PC-9 (cell line): ENCODE measurements at regions of chr17 and their contacts with region 1.

Region 1: DNA sequence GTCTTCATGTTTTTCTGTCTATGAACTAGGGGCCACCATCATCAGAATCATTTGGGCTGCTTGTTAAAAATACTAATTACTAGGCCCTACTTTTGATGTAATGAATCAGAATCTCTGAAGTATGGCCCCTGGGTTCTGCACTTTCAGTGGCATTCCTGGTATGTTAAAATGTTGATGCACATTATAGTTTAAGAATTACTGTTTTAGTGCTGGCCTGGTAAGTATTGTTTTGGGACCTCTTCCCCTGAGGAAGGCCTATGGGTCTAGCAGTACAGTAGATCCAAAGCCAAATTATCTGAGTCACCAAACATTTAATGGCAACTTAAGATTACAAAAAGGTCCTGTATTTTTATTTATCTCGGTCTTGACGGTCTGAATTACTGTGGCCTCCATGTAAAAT is 58.8 kb downstream of the AP2B1 start:
- DNase-seq: no peak
- H3K4me3 ChIP-seq: no peak overlapping the region
- H3K27ac ChIP-seq: no peak overlapping the region
- H3K4me1 ChIP-seq: no peaks in the 10 kb centered on the region
- H3K27me3 ChIP-seq: no peaks in the 10 kb centered on the region
- CTCF ChIP-seq: no peak

Region 2: DNA sequence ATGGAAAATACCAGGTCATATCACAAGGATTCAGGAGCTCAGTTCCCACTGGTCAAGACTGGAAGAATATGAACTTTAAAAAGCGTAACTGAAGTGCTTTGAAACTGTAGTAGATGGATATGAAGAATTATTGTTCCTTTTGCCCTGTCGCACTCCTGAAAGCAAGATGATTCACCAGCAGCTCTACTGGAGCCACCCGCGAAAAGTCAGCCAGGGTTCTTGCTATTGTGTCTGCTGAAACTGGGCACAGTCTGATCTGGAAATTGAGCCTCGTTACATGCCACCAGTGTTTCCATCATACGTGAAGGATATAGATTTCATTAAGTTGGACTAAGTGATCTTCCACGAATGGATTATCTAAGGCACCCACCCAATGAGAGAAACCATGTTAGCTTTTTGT is 42.2 kb before region 1 on chr17:
- CTCF ChIA-PET with region 1: no interaction called
- POLR2A ChIA-PET with region 1: no interaction called
- intact Hi-C with region 1: loop called (anchors 5 kb)
- DNase-seq: no peak
- H3K4me3 ChIP-seq: no peak overlapping the region
- H3K27ac ChIP-seq: no peak overlapping the region
- H3K4me1 ChIP-seq: no peaks in the 10 kb centered on the region
- H3K27me3 ChIP-seq: no peaks in the 10 kb centered on the region
- CTCF ChIP-seq: no peak

Region 3: DNA sequence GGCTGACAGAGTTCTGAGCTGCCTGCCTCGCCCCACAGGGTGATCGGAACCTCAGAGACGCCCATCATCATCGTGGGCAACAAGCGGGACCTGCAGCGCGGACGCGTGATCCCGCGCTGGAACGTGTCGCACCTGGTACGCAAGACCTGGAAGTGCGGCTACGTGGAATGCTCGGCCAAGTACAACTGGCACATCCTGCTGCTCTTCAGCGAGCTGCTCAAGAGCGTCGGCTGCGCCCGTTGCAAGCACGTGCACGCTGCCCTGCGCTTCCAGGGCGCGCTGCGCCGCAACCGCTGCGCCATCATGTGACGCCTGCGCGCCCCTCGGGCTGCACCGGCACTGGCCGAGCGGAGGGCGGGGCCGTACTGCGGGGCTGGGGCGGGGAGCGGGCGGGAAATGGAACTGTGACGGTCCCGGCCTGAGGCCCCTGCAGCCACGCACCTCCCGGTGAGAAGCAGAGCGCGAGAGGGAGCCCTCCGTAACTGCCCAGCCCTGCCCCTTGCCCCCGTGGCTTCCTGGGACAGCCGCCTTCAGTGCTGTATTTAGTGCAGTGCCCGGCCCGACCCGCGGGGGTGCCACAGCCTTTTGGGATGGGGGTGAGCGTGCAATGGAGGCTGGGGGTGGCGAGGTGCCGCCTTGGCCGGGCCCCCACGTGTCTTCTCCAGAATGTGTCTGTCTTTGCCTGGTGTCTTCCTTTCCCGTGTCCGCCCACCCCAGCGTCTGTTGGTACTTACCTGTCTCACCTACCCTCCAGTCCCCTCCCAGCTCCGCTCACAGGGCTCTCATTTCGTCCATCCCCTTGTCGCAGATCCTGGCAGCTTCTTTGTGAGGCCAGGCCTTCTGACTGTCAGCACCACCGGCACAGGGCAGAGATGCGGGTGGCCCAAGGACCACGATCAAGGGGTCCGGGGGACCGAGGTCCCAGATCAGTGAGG is 95.3 kb after region 1 on chr17:
- CTCF ChIA-PET with region 1: no interaction called
- POLR2A ChIA-PET with region 1: interaction called, 16 read pairs
- intact Hi-C with region 1: no loop called
- DNase-seq: no peak
- H3K4me3 ChIP-seq: no peak overlapping the region
- H3K27ac ChIP-seq: no peak overlapping the region
- H3K4me1 ChIP-seq: no peaks in the 10 kb centered on the region
- H3K27me3 ChIP-seq: peaks cover 91% of the 10 kb centered on the region
- CTCF ChIP-seq: no peak